Activated CD4-positive, alpha-beta T cell treated with anti-CD3 and anti-CD28 coated beads, Interleukin-2, amount 10 ng/mL, durations not matched to agents 24 days and 14 days (primary cell): ENCODE measurements at regions of chr16 and their contacts with region 1.

Region 1: DNA sequence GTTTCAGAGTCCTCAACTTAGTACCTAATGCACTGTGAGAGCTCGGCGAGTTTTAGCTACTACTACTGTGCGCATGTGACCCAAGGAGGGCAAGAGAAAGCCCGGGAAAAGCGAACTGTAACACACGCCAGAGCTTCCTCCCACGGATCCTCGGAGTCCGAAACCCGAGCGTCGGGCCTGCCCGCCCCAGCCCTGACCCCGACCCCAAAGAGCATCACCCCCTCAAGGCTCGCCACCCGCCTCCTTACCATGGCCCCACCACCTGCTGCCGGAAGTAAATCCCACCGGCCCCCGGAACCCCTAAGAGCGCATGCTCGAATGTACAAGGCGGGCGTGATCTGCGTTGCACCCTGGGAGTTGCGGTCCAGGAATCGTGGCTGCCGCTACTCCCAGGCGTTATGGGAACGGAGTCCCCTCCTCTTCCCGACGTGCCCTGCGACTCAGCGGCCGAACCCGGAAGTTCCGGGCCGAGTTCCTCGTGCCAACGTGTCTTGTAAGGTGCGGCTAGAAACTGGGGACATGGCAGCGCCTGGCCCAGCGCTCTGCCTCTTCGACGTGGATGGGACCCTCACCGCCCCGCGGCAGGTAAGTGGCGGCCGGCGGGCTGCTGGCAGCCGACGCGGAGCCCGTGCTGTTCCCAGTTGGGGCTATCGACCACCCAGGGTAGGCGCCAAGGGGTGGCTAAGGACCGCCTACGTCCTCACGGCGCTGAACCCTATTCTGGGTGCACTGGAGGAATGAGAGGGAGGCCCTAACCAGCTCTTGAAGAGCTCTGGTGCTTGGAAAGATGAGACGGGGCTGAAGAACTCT is at the starts of genes PMM2 and TMEM186:
- DNase-seq: peak; percentile 99
- H3K4me3 Mint-ChIP-seq: peak within 1 kb of the TSS; percentile 98
- H3K27ac Mint-ChIP-seq: peak within 1 kb of the TSS; percentile 95
- H3K4me1 Mint-ChIP-seq: peaks cover 23% of the 10 kb centered on the region
- H3K27me3 Mint-ChIP-seq: no peaks in the 10 kb centered on the region
- total RNA-seq, gene PMM2: 74.1 and 74.9 TPM in 2 replicates
- total RNA-seq, gene TMEM186: 19.3 and 20.4 TPM in 2 replicates

Region 2: DNA sequence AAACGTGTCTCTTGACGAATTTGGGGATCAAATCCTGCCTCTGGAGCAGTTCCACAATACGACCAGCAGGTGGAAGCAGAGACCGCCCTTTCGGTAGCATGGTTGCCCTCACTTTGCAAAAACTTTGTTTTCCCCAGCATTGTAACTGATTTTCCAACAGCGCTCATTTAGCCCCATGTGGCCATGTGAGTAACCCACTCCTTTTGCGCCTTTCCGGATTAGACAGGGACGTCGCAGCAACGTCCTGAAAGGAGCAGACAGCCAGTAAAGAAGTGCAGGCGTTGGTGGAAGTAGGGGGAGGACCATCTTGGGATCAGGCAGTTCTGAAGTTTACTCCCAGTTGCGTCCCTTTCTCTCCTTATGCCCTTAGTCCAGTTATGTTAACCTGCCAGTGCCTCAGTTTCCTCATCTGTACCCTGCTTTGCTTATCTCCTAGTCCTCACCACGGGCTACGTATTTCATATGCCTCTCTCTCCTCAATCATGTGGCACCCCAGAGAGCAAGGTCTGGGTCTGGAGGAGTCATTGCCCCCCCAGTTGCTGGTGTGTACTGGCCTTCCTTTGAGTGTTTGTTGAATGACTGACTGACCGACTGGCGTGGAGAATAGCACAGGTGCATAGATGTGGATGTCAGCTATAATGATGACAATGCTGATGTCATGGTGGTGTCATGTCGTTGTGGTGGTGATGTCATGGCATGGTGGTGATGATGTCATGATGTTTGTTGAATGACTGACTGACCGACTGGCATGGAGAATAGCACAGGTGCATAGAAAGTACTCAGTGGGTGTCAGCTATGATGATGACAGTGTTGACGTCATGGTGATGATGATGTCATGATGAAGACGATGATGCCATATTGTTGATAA is 229.6 kb before region 1 on chr16:
- intact Hi-C with region 1: loop called (anchors 1 kb)
- DNase-seq: peak; percentile 93
- H3K4me3 Mint-ChIP-seq: no peak overlapping the region
- H3K27ac Mint-ChIP-seq: peak overlapping the region; percentile 34
- H3K4me1 Mint-ChIP-seq: peaks cover 5% of the 10 kb centered on the region
- H3K27me3 Mint-ChIP-seq: no peaks in the 10 kb centered on the region

Region 3: GRCh38 chr16:8660841-8661301 is 136.7 kb before region 1 on chr16:
- intact Hi-C with region 1: loop called (anchors 1 kb)
- DNase-seq: peak; percentile 90
- H3K4me3 Mint-ChIP-seq: no peak overlapping the region
- H3K27ac Mint-ChIP-seq: no peak overlapping the region
- H3K4me1 Mint-ChIP-seq: peaks cover 3% of the 10 kb centered on the region
- H3K27me3 Mint-ChIP-seq: no peaks in the 10 kb centered on the region

Region 4: DNA sequence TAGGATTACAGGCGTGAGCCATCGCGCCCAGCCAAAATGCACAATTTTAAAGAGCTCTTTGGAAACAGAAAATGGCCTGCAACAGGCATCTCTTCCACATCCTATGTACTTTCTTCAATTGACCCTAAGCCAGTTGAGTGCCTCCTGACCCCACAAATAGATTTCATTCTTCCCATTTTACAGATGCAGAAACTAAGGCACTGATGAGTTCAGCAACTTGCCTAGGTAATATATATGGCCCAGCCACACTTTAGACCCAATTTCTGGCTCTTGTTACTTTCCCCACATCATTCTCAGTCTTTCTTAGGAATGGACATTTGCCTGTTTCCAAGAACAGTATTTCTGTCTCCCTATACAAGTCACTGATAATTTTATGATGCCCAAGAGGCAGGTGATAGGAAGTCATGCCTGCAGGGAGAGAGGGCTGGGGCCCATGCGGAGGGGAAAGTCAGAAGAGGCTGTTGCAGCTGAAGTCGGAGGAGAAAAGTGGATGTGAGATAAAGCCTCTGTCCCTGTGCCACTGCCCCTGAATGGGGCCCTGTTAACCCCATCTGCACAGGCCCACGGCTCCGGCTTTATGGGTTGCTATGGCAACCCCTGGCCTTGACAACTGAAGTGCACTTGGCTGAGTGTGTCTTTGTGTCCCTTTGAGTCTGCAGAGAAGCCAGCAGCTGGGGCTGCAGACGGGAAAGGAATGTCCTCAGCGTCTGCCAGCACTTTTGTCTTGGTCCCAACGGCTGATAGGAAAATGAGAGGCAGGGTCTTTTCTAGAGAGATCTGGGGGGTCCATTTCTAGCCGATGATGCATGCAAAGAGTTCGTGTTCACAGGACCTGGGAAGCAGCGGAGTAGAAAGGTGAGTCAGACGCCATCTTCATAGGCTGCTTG is 77.2 kb before region 1 on chr16:
- intact Hi-C with region 1: no loop called
- DNase-seq: no peak
- H3K4me3 Mint-ChIP-seq: no peak overlapping the region
- H3K27ac Mint-ChIP-seq: no peak overlapping the region
- H3K4me1 Mint-ChIP-seq: no peaks in the 10 kb centered on the region
- H3K27me3 Mint-ChIP-seq: no peaks in the 10 kb centered on the region

Region 5: DNA sequence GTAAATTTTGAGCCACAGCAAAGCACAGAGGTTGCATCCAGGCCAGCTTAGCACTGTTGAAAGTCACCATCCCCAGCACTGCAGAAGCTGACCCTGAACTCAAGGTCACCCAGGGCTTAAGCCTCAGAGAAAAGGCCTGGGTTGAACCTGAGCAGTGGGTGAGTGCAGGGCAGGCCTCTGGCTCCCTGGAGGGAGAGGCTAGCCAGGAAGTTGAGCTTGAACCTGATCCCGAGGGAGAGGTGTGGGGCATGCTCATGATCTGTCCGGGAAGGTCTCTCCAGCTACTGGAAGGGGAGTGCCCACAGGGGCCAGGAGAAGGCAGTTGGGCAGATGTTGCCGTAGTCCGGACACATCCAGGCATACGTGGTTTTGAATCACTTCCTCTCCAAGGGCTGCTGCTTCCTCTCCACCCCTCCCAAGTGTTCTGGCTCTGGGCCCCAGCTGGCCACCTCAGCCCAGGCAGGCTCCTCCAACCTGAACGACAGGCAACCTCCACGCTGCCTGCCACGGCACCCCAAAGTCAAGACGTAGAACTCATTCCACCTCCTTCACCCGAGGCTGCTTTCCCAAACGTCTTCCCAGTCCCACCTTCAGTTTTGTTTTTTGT is 52.8 kb after region 1 on chr16:
- intact Hi-C with region 1: no loop called
- DNase-seq: no peak
- H3K4me3 Mint-ChIP-seq: peak overlapping the region; percentile 14
- H3K27ac Mint-ChIP-seq: peak overlapping the region; percentile 80
- H3K4me1 Mint-ChIP-seq: peaks cover 25% of the 10 kb centered on the region
- H3K27me3 Mint-ChIP-seq: no peaks in the 10 kb centered on the region

Region 6: DNA sequence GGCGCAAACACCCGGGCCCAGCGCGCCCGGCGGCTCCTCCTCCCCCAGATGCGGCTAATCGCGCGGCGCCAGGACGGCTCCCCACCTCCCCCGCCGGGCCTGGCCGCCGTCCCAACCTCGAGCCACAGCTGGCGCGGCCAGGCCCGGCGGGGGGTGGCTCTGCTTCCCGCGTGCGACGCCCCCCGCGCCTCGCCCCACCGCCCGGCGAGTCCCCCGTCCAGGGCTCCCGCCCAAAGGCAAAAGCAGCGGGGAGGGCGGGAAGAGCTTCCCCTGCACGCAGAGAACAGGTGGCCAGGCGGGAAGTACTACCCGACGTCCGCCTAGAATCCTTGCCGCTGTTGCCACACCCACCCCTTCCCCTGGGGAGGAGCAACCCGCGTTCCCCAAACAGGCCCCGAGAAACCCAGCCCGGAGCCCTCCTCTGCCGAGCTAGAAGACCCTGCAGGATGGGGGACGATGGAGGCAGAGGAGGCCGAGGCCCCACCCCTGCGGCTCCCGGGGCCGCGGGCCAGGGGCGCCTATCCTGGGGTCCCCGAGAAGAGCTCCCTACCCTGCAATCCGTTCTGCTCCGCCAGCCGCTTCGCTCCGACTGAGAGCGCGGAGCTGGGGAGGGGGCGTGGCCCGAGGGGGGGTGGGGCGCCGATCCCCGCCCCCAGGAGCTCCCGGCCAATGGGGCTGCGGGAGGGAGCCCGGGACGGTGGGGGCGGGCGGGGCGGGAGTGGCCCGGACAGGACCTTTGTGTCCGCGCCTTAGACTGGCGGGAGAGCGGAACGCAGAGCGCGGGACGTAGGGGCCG is 71.0 kb after region 1 on chr16 and contains the start of gene CARHSP1:
- intact Hi-C with region 1: loop called (anchors 1 kb)
- DNase-seq: peak; percentile 95
- H3K4me3 Mint-ChIP-seq: peak within 1 kb of the TSS; percentile 90
- H3K27ac Mint-ChIP-seq: peak within 1 kb of the TSS; percentile 89
- H3K4me1 Mint-ChIP-seq: peaks cover 39% of the 10 kb centered on the region
- H3K27me3 Mint-ChIP-seq: no peaks in the 10 kb centered on the region
- total RNA-seq, gene CARHSP1: 67.7 and 73.3 TPM in 2 replicates

Region 7: GRCh38 chr16:9090960-9091866 is 293.6 kb after region 1 on chr16 and contains the start of gene HAPSTR1:
- intact Hi-C with region 1: loop called (anchors 2 kb)
- DNase-seq: peak; percentile 99
- H3K4me3 Mint-ChIP-seq: peak within 1 kb of the TSS; percentile 97
- H3K27ac Mint-ChIP-seq: peak within 1 kb of the TSS; percentile 98
- H3K4me1 Mint-ChIP-seq: peaks cover 28% of the 10 kb centered on the region
- H3K27me3 Mint-ChIP-seq: peaks cover 2% of the 10 kb centered on the region
- total RNA-seq, gene HAPSTR1: 53.4 and 54.2 TPM in 2 replicates

Region 8: GRCh38 chr16:10743610-10744393 is 1946.2 kb after region 1 on chr16 and contains the start of gene NUBP1:
- intact Hi-C with region 1: loop called (anchors 5 kb)
- DNase-seq: peak; percentile 100
- H3K4me3 Mint-ChIP-seq: peak within 1 kb of the TSS; percentile 85
- H3K27ac Mint-ChIP-seq: peak within 1 kb of the TSS; percentile 98
- H3K4me1 Mint-ChIP-seq: peaks cover 45% of the 10 kb centered on the region
- H3K27me3 Mint-ChIP-seq: peaks cover 2% of the 10 kb centered on the region
- total RNA-seq, gene NUBP1: 38.6 and 39.5 TPM in 2 replicates